Posterior vena cava (tissue), 2 donors: ENCODE measurements at regions of chr7 and their contacts with region 1.

Region 1: DNA sequence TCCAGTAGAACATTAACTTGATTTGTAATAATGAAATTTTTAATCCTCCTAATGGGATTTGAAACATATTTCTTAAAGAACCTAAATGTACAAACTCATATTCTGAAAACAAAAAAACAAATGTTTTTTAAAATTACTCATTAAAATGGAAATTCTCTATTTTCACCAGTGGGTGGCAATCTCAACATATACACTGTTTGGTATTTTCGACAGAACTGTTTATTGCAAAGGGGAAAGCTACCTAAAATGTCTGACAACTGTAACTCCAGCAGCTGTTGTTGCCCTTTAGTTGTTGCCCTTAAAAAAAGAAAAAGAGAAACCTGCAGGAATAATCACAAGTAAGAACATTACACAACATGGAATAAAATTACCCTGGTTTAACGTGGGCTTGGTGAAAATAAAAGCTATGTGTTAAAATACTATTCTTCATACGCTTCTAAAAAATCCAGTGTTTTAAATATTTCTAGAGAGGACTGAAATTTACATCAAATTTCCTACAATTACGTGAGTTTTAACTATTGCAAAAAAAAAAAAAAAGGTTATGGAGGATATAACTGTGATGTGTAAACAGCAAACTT is 54.5 kb downstream of the COL1A2 start:
- DNase-seq: no peak

Region 2: GRCh38 chr7:94509879-94510581 is 60.8 kb after region 1 on chr7:
- intact Hi-C with region 1: no loop called
- DNase-seq: peak; percentile 88

Region 3: GRCh38 chr7:94657771-94658693 is 208.8 kb after region 1 on chr7:
- intact Hi-C with region 1: loop called in 1 of 2 experiments (anchors 10 kb)
- DNase-seq: peak; percentile 96

Region 4: GRCh38 chr7:95246831-95247370 is 797.7 kb after region 1 on chr7:
- intact Hi-C with region 1: loop called in 1 of 2 experiments (anchors 10 kb)
- DNase-seq: no peak

Region 5: DNA sequence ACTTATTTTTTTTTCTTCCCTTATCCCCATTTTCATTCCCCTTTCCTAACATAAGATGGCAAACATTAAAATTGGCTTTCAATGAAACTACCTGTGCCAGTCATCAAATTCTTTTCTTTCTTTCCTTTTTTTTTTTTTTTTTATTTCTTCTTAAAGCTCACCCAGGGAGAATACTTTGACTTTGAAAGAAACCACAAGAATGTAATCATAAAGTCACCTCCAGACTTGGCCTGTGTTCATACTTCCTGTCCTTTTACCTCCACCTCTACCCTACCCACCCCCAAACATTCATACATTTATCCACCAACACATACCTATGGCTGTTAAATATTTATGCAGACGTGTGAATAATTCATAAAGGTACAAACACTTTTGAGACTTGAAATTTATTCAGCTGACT is 1618.1 kb after region 1 on chr7:
- intact Hi-C with region 1: loop called in 1 of 2 experiments (anchors 5 kb)
- DNase-seq: no peak